ENCODE measurements at regions of chr6 and their contacts with region 1.

Region 1: GRCh38 chr6:154247119-154247861 is 109.3 kb downstream of the IPCEF1 start:
- DNase-seq: peak in 1 of 42 donors; percentile 9

Region 2: GRCh38 chr6:154232013-154232910 is 15.0 kb before region 1 on chr6:
- intact Hi-C with region 1: loop called (anchors 2 kb)
- DNase-seq: peak in 2 of 42 donors; percentile 13 to 41

Measured in head of caudate nucleus (tissue), 42 donors.